Dorsolateral prefrontal cortex (tissue), 120 donors: ENCODE measurements at regions of chr18 and their contacts with region 1.

Region 1: DNA sequence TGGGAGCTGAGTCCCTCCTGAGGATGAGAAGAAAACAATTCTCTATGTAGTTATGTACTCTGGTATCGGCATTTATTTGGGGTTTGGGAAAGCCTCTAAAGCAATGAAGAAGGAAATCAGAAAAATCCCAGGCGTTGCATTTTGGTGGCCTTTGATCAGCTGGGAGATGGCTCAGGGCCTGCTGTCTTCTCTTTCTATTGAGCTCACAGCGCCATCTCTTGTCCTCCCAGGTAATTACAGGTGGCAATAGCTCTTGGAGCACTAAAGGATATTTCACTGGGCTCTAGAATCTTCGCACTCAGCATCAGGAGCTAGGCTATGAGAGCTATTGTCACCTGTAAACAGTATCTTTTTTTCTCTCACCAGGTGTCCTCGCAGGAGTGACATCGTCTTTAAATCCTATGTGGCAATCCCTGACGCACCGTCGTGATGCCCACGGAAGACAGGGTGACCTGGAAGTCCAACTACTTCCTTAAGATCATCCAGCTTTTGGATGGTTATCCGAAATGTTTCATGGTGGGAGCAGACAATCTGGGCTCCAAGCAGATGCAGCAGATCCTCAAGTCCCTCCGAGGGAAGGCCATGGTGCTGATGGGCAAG is 76.1 kb upstream of the PMAIP1 start:
- DNase-seq: peak in 7 of 10 donors; percentile 15 to 78 (median 57)
- H3K4me3 ChIP-seq: no peak overlapping the region
- H3K27ac ChIP-seq: no peak overlapping the region
- H3K27me3 ChIP-seq: peaks cover 0 to 4% (median 0%) of the 10 kb centered on the region in 45 donors
- CTCF ChIP-seq: peak; percentile 52 to 88 (median 74)

Region 2: GRCh38 chr18:59459369-59460079 is 364.2 kb before region 1 on chr18:
- intact Hi-C with region 1: loop called (anchors 2 to 5 kb)
- DNase-seq: no peak
- H3K4me3 ChIP-seq: no peak overlapping the region
- H3K27ac ChIP-seq: no peak overlapping the region
- H3K27me3 ChIP-seq: peaks cover 0 to 7% (median 0%) of the 10 kb centered on the region in 45 donors
- CTCF ChIP-seq: peak; percentile 47 to 75 (median 64)

Region 3: GRCh38 chr18:59697236-59697932 is 126.3 kb before region 1 on chr18 and contains the start of gene CCBE1:
- intact Hi-C with region 1: loop called in 1 of 2 experiments (anchors 10 kb)
- DNase-seq: peak in 4 of 10 donors; percentile 26 to 54 (median 48)
- H3K4me3 ChIP-seq: peak within 1 kb of the TSS; percentile 14 to 68 (median 48)
- H3K27ac ChIP-seq: no peak within 1 kb of the TSS
- H3K27me3 ChIP-seq: peaks cover 0 to 76% (median 48%) of the 10 kb centered on the region in 45 donors
- CTCF ChIP-seq: peak; percentile 14 to 74 (median 60)
- total RNA-seq, gene CCBE1: 0.71 to 7.9 (median 2.8) TPM